Activated CD4-positive, alpha-beta T cell treated with anti-CD3 and anti-CD28 coated beads for 36 hours (primary cell): ENCODE measurements at regions of chr19 and their contacts with region 1.

Region 1: GRCh38 chr19:48492925-48493717 is 18.5 kb downstream of the LMTK3 start:
- DNase-seq: peak; percentile 98
- ATAC-seq: peak; percentile 81
- H3K4me3 Mint-ChIP-seq: peak overlapping the region; percentile 68
- H3K27ac Mint-ChIP-seq: peak overlapping the region; percentile 42
- H3K4me1 Mint-ChIP-seq: peaks cover 30% of the 10 kb centered on the region
- H3K27me3 Mint-ChIP-seq: peaks cover 39% of the 10 kb centered on the region

Region 2: DNA sequence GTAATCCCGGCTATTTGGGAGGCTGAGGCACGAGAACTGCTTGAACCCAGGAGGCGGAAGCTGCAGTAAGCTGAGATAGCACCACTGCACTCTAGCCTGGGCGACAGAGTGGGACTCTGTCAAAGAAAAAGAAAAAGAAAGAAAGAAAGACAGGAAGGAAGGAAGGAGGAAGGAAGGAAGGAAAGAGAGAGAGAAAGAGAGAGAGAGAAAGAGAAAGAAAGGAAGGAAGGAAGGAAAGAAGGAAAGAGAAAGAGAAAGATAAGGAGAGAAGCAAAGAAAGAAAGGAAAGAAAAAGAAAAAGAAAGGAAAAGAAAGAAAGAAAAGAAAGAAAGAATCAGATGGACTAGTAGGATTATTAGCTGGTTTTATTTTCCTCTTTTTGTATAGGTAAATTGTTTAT is 943.0 kb before region 1 on chr19:
- CTCF ChIA-PET with region 1: no interaction called
- POLR2A ChIA-PET with region 1: no interaction called
- intact Hi-C with region 1: no loop called
- DNase-seq: no peak
- ATAC-seq: no peak
- H3K4me3 Mint-ChIP-seq: no peak overlapping the region
- H3K27ac Mint-ChIP-seq: no peak overlapping the region
- H3K4me1 Mint-ChIP-seq: no peaks in the 10 kb centered on the region
- H3K27me3 Mint-ChIP-seq: no peaks in the 10 kb centered on the region

Region 3: DNA sequence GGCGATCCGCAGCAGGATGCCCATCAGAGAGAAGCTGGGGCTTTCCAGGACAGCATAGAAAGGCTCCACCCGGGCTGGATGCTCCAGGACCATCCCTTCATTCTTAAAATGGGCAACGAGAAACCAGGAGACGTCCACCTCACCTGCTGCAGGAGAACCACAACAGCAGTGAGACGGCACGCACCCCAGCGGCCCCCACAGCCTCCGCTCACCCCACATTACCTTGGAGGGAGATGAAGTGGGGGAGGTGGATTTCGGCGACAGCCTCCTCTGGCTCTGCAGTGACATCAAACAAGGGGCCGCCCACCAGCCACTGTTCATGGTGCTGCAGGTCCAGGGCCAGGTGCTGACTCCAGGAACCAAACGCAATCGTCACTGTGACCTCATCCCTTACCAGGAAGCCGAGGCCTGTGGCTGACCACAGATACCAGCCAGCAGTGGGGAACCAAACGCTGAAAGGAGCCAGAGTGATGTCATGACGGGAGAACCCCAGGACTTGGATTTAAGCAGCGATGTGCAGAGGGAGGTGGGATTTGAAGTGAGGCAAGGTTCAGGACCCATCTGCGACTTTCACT is 262.5 kb before region 1 on chr19:
- CTCF ChIA-PET with region 1: no interaction called
- POLR2A ChIA-PET with region 1: no interaction called
- intact Hi-C with region 1: no loop called
- DNase-seq: peak; percentile 69
- ATAC-seq: peak; percentile 72
- H3K4me3 Mint-ChIP-seq: no peak overlapping the region
- H3K27ac Mint-ChIP-seq: peak overlapping the region; percentile 45
- H3K4me1 Mint-ChIP-seq: peaks cover 9% of the 10 kb centered on the region
- H3K27me3 Mint-ChIP-seq: no peaks in the 10 kb centered on the region

Region 4: GRCh38 chr19:48363810-48364563 is 129.1 kb before region 1 on chr19 and contains the starts of genes SYNGR4 and TMEM143:
- CTCF ChIA-PET with region 1: interaction called, 5 read pairs
- POLR2A ChIA-PET with region 1: interaction called, 3 read pairs
- intact Hi-C with region 1: loop called in 1 of 2 experiments (anchors 1 kb)
- DNase-seq: peak; percentile 99
- ATAC-seq: peak; percentile 90
- H3K4me3 Mint-ChIP-seq: peak within 1 kb of the TSS; percentile 84
- H3K27ac Mint-ChIP-seq: peak within 1 kb of the TSS; percentile 95
- H3K4me1 Mint-ChIP-seq: peaks cover 13% of the 10 kb centered on the region
- H3K27me3 Mint-ChIP-seq: no peaks in the 10 kb centered on the region
- total RNA-seq, gene SYNGR4: 0.25 TPM in 1 of 2 experiments, not detected in the other
- total RNA-seq, gene TMEM143: 18.9 to 21.5 TPM

Region 5: DNA sequence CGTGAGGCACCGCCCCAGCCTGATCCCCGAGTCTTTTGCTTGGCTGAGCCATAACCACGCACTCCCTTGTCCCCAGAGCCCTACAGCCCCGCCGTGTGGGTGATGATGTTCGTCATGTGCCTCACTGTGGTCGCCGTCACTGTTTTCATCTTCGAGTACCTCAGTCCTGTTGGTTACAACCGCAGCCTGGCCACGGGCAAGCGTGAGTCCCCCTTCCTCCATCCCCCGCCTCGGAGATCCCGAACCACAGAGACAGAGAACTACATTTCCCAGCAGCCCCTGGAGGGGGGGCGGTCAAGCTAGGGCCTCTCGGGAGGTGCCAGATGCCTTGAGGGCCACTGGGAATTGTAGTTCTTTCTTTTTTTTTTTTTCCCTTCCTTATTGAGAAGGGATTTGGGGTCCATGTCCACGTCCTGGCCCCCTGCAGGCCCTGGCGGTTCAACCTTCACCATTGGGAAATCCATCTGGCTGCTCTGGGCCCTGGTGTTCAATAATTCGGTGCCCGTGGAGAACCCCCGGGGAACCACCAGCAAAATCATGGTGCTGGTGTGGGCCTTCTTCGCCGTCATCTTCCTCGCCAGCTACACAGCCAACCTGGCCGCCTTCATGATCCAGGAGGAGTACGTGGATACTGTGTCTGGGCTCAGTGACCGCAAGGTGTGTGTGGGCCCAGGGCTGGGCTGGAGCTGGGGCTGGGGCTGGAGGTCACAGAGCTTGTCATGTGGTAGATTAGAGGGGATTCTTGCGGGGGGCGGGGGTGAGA is 73.8 kb before region 1 on chr19:
- CTCF ChIA-PET with region 1: no interaction called
- POLR2A ChIA-PET with region 1: no interaction called
- intact Hi-C with region 1: loop called in 1 of 2 experiments (anchors 1 kb)
- DNase-seq: peak; percentile 87
- ATAC-seq: peak; percentile 81
- H3K4me3 Mint-ChIP-seq: peak overlapping the region; percentile 29
- H3K27ac Mint-ChIP-seq: peak overlapping the region; percentile 83
- H3K4me1 Mint-ChIP-seq: peaks cover 21% of the 10 kb centered on the region
- H3K27me3 Mint-ChIP-seq: peaks cover 15% of the 10 kb centered on the region

Region 6: DNA sequence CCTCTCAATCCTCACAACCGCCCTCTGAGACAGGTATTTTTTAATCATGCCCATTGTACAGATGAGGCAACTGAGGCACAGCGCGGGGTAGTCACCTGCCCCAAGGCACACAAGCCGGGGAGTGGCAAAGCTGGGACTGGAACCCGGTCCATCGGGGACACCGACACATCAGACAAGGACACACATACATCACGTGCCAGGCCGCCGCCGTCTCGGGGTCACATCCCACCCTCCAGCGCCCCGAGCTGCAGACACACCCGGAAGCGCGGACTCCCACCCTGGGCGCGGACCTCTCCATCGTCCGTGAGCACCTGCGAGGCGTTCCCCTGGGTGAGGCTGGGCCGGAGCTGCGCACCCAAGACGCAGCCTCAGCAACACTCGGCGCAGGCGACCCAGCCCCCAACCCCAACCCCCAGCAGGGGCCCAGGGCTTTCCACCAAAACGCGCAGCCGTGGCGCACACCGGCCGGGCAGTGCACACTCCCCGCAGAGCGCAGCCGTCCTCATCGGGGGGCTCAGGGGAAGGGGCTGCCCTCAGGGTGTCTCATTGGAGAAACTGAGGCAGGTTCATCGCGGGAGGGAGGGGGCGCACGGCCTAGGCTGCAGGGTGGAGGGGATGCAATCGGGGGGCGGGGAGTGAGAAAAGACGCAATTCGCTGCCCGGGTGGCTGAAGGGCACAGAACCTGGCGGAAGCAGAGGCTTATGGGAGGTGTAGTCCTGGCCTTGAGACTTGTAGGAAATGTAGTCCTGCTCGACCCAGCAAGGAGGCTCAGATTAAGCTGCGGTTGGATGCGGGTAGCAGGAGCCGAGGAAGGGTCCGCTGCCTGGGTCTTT is 20.4 kb after region 1 on chr19:
- CTCF ChIA-PET with region 1: interaction called, 8 read pairs
- POLR2A ChIA-PET with region 1: no interaction called
- intact Hi-C with region 1: loop called in 1 of 2 experiments (anchors 1 kb)
- DNase-seq: peak; percentile 86
- ATAC-seq: peak; percentile 81
- H3K4me3 Mint-ChIP-seq: no peak overlapping the region
- H3K27ac Mint-ChIP-seq: peak overlapping the region; percentile 30
- H3K4me1 Mint-ChIP-seq: peaks cover 8% of the 10 kb centered on the region
- H3K27me3 Mint-ChIP-seq: no peaks in the 10 kb centered on the region

Region 7: GRCh38 chr19:48618916-48619691 is 126.0 kb after region 1 on chr19 and contains the starts of genes RPL18 and SPHK2:
- CTCF ChIA-PET with region 1: no interaction called
- POLR2A ChIA-PET with region 1: interaction called, 4 read pairs
- intact Hi-C with region 1: loop called in 1 of 2 experiments (anchors 1 kb)
- DNase-seq: peak; percentile 97
- ATAC-seq: peak; percentile 82
- H3K4me3 Mint-ChIP-seq: peak within 1 kb of the TSS; percentile 94
- H3K27ac Mint-ChIP-seq: peak within 1 kb of the TSS; percentile 97
- H3K4me1 Mint-ChIP-seq: peaks cover 48% of the 10 kb centered on the region
- H3K27me3 Mint-ChIP-seq: no peaks in the 10 kb centered on the region
- total RNA-seq, gene RPL18: 2,026 to 2,191 TPM
- total RNA-seq, gene SPHK2: 27.0 TPM

Region 8: DNA sequence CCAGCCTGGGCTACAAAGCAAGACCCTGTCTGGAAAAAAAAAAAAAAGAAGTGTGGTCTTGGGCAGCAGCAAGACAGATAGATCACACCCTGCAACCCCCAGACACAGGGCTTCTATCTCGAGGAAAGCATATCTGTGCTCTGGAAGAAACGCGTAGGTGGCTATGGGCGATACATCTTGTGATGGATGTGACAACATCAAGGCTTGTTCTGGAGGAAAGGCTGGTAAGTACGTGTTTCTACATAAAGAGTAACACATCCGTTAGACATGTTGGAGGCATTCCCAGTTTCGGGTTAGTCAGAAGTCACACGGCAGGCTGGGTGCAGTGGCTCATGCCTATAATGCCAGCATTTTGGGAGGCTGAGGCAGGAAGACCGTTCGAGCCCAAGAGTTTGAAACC is 433.8 kb after region 1 on chr19:
- CTCF ChIA-PET with region 1: no interaction called
- POLR2A ChIA-PET with region 1: no interaction called
- intact Hi-C with region 1: no loop called
- DNase-seq: peak; percentile 55
- ATAC-seq: peak; percentile 74
- H3K4me3 Mint-ChIP-seq: no peak overlapping the region
- H3K27ac Mint-ChIP-seq: no peak overlapping the region
- H3K4me1 Mint-ChIP-seq: peaks cover 6% of the 10 kb centered on the region
- H3K27me3 Mint-ChIP-seq: no peaks in the 10 kb centered on the region

Region 9: DNA sequence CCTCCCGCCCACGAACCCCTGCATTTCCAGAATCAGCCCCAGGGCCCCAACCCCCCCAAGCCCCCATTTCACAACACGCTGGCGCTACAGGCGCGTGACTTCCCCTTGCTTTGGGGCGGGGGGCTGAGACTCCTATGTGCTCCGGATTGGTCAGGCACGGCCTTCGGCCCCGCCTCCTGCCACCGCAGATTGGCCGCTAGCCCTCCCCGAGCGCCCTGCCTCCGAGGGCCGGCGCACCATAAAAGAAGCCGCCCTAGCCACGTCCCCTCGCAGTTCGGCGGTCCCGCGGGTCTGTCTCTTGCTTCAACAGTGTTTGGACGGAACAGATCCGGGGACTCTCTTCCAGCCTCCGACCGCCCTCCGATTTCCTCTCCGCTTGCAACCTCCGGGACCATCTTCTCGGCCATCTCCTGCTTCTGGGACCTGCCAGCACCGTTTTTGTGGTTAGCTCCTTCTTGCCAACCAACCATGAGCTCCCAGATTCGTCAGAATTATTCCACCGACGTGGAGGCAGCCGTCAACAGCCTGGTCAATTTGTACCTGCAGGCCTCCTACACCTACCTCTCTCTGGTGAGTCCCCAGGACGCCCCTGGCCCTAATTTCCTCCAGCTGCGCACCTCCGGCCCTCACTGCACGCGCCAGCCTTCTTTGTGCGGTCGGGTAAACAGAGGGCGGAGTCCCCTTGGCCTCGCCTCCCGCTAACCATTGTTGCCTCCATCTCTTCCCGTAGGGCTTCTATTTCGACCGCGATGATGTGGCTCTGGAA is 472.1 kb after region 1 on chr19 and contains the start of gene FTL:
- CTCF ChIA-PET with region 1: no interaction called
- POLR2A ChIA-PET with region 1: no interaction called
- intact Hi-C with region 1: loop called in 1 of 2 experiments (anchors 10 kb)
- DNase-seq: peak; percentile 95
- ATAC-seq: peak; percentile 79
- H3K4me3 Mint-ChIP-seq: peak within 1 kb of the TSS; percentile 86
- H3K27ac Mint-ChIP-seq: peak within 1 kb of the TSS; percentile 90
- H3K4me1 Mint-ChIP-seq: peaks cover 53% of the 10 kb centered on the region
- H3K27me3 Mint-ChIP-seq: no peaks in the 10 kb centered on the region
- total RNA-seq, gene FTL: 809 to 1,111 TPM